ENCODE measurements at regions of chr15 and their contacts with region 1.

Region 1: GRCh38 chr15:84658080-84658787 is at the start of gene NMB:
- DNase-seq: peak; percentile 39 to 95 (median 66)

Region 2: GRCh38 chr15:84600851-84601838 is 57.1 kb before region 1 on chr15 and contains the start of gene ZSCAN2:
- intact Hi-C with region 1: no loop called
- DNase-seq: peak; percentile 94 to 100 (median 97)

Region 3: DNA sequence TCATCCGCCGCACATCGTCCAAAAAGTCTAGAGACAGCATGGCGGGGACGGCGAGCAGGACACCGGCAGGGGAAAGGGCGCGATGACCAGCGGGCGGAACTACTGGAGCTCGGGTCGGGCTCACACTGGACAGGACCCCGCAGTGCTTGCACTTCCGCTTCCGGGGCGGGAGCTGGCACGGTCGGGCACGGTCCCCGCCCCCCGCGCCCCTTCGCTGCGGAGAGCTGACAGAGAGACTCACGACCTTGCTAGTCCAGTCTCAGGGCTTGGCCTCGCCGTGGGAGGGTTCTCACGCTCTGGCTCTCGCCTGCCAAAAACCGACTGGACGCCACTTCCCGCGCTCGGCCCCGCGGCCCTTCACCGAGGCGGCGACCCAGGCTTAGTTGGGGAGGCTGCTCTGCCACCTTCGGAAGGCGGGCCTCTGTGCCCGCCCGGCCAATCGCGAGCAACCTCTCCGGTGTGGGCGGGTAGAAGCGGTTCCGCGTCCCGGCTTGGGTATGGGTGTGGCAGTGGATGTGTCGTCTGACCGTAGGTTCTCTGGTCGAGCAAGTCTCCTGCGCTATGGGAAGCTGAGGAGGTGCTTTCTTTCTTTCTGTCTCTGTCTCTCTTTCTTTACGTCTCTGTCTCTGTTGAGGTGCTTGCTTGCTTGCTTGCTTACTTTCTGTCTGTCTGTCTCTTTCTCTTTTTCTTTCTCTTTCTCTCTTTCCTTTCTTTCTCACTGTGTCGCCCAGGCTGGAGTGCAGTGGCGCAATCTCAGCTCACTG is 58.0 kb after region 1 on chr15 and contains the start of gene SEC11A:
- intact Hi-C with region 1: loop called (anchors 5 kb)
- DNase-seq: peak; percentile 94 to 99 (median 96)

Region 4: GRCh38 chr15:84929744-84930371 is 271.6 kb after region 1 on chr15:
- intact Hi-C with region 1: loop called (anchors 5 kb)
- DNase-seq: peak in 1 of 10 donors; percentile 70

Region 5: GRCh38 chr15:84940399-84940798 is 282.2 kb after region 1 on chr15:
- intact Hi-C with region 1: no loop called
- DNase-seq: no peak

Measured in posterior cingulate gyrus (tissue), 11 donors.